GM12878 (cell line): ENCODE measurements at regions of chr12 and their contacts with region 1.

Region 1: GRCh38 chr12:89524541-89525285 is at the start of gene GALNT4:
- DNase-seq: peak; percentile 42
- ATAC-seq: peak; percentile 86
- H3K4me3 ChIP-seq: peak within 1 kb of the TSS; percentile 96
- H3K27ac ChIP-seq: peak within 1 kb of the TSS; percentile 82
- H3K4me1 ChIP-seq: peaks cover 14% of the 10 kb centered on the region
- H3K27me3 ChIP-seq: no peaks in the 10 kb centered on the region
- CTCF ChIP-seq: peak; percentile 55 to 75 (median 61)
- EP300 ChIP-seq: no peak
- POLR2A ChIP-seq: peak; percentile 65
- RAD21 ChIP-seq: peak; percentile 69
- polyA plus RNA-seq, gene GALNT4: 0.90 to 1.1 TPM

Region 2: DNA sequence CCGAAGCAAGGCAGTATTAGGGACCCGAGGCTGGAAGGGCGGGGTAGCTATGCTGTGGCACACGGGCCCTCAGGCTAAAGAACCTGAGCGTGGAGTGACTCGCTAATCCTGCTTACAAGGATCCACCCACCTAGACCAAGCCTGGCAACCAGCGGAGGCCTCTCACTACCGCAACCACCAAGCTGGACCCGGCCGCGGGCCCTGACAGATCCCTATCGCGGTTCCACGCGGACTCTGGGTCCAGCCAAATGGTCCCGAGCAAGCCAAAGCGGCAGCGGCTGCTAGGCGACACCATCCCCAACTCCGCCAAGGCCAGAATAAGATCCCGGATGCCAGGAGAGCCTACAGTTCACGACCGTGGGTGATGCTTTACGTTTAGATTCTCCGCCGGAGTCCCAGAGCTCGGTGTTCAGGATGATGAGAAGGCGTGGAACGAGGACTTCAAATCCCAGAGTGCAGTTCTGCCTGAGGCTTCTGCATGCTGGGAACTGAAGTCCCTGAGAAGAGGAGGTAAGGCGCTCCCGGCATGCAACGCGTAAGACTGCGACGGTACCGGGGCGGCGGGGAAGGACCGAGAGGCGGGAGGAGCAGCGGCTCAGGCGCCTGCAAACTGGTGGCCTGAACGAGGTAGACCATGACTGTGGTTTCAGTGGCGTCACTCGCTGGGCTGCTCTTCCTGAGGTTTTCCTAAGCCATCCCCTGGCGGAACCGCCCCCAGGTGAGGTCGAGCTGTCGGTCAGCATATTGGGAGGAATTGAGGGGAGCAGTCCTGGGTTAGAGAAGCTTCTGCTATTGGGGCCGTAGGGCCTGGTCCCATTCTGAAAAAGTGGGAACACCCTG is 1382.7 kb before region 1 on chr12 and contains the starts of genes CEP290 and TMTC3:
- CTCF ChIA-PET with region 1: no interaction called
- POLR2A ChIA-PET with region 1: no interaction called
- RAD21 ChIA-PET with region 1: no interaction called
- SMC1A ChIA-PET with region 1: interaction called, 3 read pairs
- in situ Hi-C with region 1: loop called (anchors 25 kb)
- intact Hi-C with region 1: loop called (anchors 10 kb)
- DNase-seq: peak; percentile 97
- ATAC-seq: peak; percentile 94
- H3K4me3 ChIP-seq: peak within 1 kb of the TSS; percentile 96
- H3K27ac ChIP-seq: peak within 1 kb of the TSS; percentile 75
- H3K4me1 ChIP-seq: no peaks in the 10 kb centered on the region
- H3K27me3 ChIP-seq: no peaks in the 10 kb centered on the region
- CTCF ChIP-seq: no peak
- EP300 ChIP-seq: no peak
- POLR2A ChIP-seq: peak; percentile 84
- RAD21 ChIP-seq: no peak
- polyA plus RNA-seq, gene CEP290: 4.8 to 8.9 TPM
- polyA plus RNA-seq, gene TMTC3: 1.5 to 2.8 TPM

Region 3: GRCh38 chr12:89051065-89051677 is 473.5 kb before region 1 on chr12:
- CTCF ChIA-PET with region 1: no interaction called
- POLR2A ChIA-PET with region 1: no interaction called
- RAD21 ChIA-PET with region 1: no interaction called
- SMC1A ChIA-PET with region 1: no interaction called
- in situ Hi-C with region 1: no loop called
- intact Hi-C with region 1: loop called (anchors 1 kb)
- DNase-seq: no peak
- ATAC-seq: peak; percentile 70
- H3K4me3 ChIP-seq: no peak overlapping the region
- H3K27ac ChIP-seq: no peak overlapping the region
- H3K4me1 ChIP-seq: no peaks in the 10 kb centered on the region
- H3K27me3 ChIP-seq: no peaks in the 10 kb centered on the region
- CTCF ChIP-seq: peak; percentile 66 to 74 (median 69)
- EP300 ChIP-seq: no peak
- POLR2A ChIP-seq: no peak
- RAD21 ChIP-seq: peak; percentile 96

Region 4: DNA sequence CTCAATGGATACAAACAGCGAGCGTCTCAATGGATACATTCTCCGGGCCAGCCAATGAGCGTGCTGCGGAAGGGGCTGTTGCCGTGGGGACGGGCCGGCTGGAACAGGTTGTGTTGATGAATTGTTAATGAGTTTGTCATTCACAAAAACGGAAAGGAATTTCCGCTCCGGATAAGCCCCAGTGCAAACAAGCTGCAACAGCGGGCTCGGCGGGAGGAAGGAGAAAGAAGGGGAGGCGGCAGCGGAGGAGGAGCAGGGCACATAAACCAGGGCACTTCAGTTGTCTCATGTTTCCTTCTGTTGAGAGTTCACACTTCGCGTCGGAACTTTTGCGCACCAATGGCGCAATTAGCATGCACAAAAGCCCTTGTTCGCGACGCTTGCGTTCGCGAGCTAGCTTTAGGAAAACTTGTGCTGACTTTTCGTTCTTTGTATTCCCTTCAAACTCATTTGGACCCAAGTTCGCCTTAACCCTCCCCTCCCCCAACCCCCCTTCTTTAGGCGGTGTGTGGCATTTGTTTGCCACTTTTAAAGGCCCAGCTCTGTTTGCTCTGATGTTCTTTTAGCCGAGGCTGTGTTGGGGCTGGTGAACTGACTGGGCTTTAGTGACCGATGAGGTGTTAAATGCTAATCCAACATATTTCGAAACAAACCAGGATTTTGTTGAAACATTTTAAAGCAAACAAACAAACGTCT is 172.1 kb before region 1 on chr12 and contains the start of gene DUSP6:
- CTCF ChIA-PET with region 1: no interaction called
- POLR2A ChIA-PET with region 1: no interaction called
- RAD21 ChIA-PET with region 1: interaction called, 3 read pairs
- SMC1A ChIA-PET with region 1: no interaction called
- in situ Hi-C with region 1: no loop called
- intact Hi-C with region 1: loop called (anchors 2 kb)
- DNase-seq: no peak
- ATAC-seq: peak; percentile 19; the same call in 2 of the 3 replicates
- H3K4me3 ChIP-seq: peak within 1 kb of the TSS; percentile 65; the same call in 1 of the 2 replicates
- H3K27ac ChIP-seq: no peak within 1 kb of the TSS
- H3K4me1 ChIP-seq: no peaks in the 10 kb centered on the region; the same call in 1 of the 2 replicates
- H3K27me3 ChIP-seq: peaks cover 21 to 49% of the 10 kb centered on the region in 2 experiments
- CTCF ChIP-seq: no peak
- EP300 ChIP-seq: no peak
- POLR2A ChIP-seq: no peak
- RAD21 ChIP-seq: no peak
- polyA plus RNA-seq, gene DUSP6: 0.02 TPM in 1 of 2 experiments, not detected in the other

Region 5: DNA sequence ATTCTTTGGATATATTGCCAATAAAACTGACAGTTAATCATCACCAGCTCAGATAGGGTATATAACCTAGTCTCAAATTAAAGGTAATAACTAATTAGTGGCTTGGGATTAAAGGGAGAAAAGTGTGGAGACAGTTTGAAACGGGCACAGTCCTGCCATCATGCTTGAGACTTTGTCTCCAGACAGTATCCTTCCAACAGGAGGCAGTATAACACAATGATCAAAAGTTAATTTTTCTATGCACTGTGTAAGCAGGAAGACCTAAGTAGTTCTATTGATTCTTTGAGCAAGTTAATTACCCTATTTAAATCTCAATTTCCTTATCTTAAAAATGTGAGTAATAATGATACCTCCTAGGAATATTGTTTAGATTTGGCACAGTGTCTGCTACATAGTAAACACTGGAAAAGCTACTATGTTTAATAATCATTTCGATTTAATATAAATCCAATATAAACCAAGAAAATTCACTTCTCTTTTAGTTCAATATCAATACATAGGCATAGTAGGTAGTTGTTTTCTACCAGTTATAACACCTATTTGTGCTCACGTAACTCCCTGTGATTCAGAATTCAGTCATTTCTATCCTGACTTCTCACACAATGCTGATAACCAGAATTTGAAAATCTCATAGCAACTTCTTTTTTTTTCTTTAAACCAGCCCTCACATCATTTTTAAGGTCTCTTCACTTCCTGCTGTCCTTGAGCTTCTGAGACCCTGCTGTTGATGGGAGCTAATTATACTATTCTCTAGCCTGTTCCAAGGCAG is 53.8 kb before region 1 on chr12:
- CTCF ChIA-PET with region 1: interaction called, 176 read pairs
- POLR2A ChIA-PET with region 1: interaction called, 4 read pairs
- RAD21 ChIA-PET with region 1: interaction called, 11 read pairs
- SMC1A ChIA-PET with region 1: interaction called, 70 read pairs
- in situ Hi-C with region 1: loop called (anchors 5 kb)
- intact Hi-C with region 1: loop called (anchors 1 kb)
- DNase-seq: no peak
- ATAC-seq: peak; percentile 73
- H3K4me3 ChIP-seq: no peak overlapping the region
- H3K27ac ChIP-seq: no peak overlapping the region
- H3K4me1 ChIP-seq: peaks cover 30% of the 10 kb centered on the region
- H3K27me3 ChIP-seq: no peaks in the 10 kb centered on the region
- CTCF ChIP-seq: peak; percentile 65 to 67 (median 65)
- EP300 ChIP-seq: no peak
- POLR2A ChIP-seq: no peak
- RAD21 ChIP-seq: peak; percentile 78